Calu3 (cell line): ENCODE measurements at regions of chr15 and their contacts with region 1.

Region 1: GRCh38 chr15:71379893-71380292 is 264.6 kb downstream of the THSD4 start:
- DNase-seq: no peak
- H3K4me3 Mint-ChIP-seq: no peak overlapping the region
- H3K27ac Mint-ChIP-seq: no peak overlapping the region
- H3K4me1 Mint-ChIP-seq: no peaks in the 10 kb centered on the region
- H3K27me3 Mint-ChIP-seq: no peaks in the 10 kb centered on the region
- CTCF ChIP-seq: no peak

Region 2: DNA sequence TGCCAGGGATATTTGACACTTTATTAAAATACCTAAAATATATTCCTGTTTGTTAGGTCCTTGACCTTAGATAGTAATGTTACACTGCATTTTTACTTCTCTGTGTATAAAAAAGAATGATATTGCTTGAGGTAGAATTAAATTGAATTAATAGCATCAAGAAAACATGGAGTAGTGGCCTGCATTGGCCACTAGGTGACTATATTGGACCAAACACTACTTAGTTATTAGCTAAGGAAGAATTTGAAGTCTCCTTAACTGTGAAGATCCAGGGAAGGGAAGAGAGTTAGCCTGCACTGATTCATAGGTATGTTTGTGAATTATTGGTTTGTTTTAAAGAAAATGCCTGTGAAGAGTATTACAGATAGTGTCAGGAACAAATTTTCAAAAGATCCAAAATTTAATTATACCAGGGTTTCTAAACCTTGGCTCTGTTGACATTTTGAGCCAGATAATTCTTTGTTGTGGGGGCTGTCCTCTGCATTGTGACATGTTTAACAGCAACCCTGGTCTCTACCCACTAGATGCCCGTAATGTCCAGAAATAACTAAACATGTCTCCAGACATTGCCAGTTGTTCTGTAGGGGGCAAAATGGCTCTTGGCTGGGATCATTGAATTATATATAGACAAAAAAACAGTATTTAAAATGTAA is 368.3 kb before region 1 on chr15:
- CTCF ChIA-PET with region 1: no interaction called
- intact Hi-C with region 1: loop called (anchors 5 kb)
- DNase-seq: peak; percentile 28
- H3K4me3 Mint-ChIP-seq: no peak overlapping the region
- H3K27ac Mint-ChIP-seq: no peak overlapping the region
- H3K4me1 Mint-ChIP-seq: no peaks in the 10 kb centered on the region
- H3K27me3 Mint-ChIP-seq: no peaks in the 10 kb centered on the region
- CTCF ChIP-seq: peak; percentile 71

Region 3: DNA sequence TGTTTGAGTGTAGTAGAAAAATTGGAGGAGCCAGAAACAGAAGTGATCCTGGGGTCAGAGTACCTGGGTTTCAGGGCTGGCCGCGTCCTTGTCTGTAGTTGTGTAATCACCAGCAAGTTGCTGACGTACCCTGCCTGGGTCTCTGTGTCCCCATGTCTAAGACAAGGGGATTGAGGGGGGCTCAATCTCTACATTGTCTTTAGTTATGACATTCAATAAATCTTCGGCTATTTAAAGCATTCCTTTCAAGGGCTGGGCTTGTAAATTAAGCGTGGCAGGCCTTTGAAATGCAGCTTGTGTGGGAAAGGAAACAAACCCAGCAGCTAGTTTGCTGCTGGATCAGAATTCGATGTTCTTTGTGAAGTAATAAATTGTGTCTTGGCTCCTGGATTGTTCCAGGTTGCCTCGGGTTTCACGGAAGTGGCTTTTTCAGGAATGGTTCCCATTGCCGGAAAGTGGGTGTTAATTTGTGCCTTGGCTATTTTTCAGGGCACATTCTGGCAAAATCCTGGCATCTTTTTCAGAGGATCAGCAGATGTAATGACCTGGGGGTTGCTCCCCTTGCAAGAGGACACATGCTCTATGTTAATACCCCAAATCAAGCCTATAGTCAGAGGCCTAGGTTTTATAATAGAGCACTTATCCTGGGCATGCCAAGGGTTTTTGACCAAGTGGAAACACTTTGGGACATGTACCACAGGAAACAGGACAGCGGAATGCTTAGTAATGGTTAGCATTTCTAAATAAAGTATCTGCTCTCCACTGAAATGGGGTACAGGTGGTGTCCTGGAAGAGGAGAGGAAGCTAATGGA is 135.7 kb after region 1 on chr15:
- CTCF ChIA-PET with region 1: no interaction called
- intact Hi-C with region 1: no loop called
- DNase-seq: no peak
- H3K4me3 Mint-ChIP-seq: no peak overlapping the region
- H3K27ac Mint-ChIP-seq: no peak overlapping the region
- H3K4me1 Mint-ChIP-seq: peaks cover 8% of the 10 kb centered on the region
- H3K27me3 Mint-ChIP-seq: no peaks in the 10 kb centered on the region
- CTCF ChIP-seq: no peak

Region 4: DNA sequence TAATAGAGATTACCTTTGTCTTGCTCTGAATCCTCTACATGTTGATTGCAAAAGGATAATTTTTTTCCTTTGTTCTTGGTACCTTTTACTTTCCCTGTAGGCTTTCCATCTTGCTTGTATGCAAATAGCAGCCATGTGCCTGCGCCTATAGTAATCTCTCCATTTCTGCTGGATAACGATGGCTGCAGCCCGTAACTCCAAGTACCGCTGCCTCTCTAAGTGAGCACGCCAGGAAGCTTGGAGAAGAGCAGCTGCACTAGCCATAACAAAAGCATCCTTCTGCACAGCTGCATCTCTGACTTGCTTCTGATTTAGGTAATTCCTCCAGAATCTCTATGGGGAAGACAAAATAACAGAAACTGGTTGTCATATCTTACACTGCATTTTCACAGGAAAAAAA is 519.8 kb after region 1 on chr15:
- CTCF ChIA-PET with region 1: no interaction called
- intact Hi-C with region 1: no loop called
- DNase-seq: no peak
- H3K4me3 Mint-ChIP-seq: no peak overlapping the region
- H3K27ac Mint-ChIP-seq: no peak overlapping the region
- H3K4me1 Mint-ChIP-seq: peaks cover 10% of the 10 kb centered on the region
- H3K27me3 Mint-ChIP-seq: no peaks in the 10 kb centered on the region
- CTCF ChIP-seq: no peak